Breast epithelium (tissue), 4 donors: ENCODE measurements at regions of chr12 and their contacts with region 1.

Region 1: DNA sequence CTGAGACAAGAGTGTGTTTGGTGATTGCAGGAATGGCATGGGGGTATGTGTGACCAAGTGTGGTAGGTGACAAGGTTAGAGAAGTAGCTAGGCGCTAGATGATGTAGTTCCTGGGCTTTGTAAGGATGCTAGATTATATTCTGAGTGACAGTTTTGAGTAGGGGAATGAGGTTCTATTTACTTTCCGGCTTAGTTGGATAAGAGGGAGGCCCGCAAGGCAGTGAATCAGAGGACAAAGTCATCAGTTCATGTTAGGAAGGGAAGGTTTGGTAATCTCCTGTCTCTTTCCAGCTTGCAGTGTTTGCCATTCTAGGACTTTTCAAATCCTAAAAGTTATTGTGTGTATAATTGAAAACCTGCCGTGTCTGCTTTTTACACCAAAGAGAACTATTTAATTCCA is 45.0 kb downstream of the CFAP54 start:
- DNase-seq: no peak
- H3K4me3 ChIP-seq: no peak overlapping the region
- H3K27ac ChIP-seq: no peak overlapping the region
- H3K4me1 ChIP-seq: no peaks in the 10 kb centered on the region
- H3K27me3 ChIP-seq: no peaks in the 10 kb centered on the region
- CTCF ChIP-seq: no peak
- POLR2A ChIP-seq: no peak

Region 2: GRCh38 chr12:95446506-95446900 is 1087.8 kb before region 1 on chr12:
- intact Hi-C with region 1: loop called (anchors 10 kb)
- DNase-seq: no peak
- H3K4me3 ChIP-seq: peak overlapping the region in 2 of 3 donors; percentile 16 to 38
- H3K27ac ChIP-seq: no peak overlapping the region
- H3K4me1 ChIP-seq: no peaks in the 10 kb centered on the region
- H3K27me3 ChIP-seq: no peaks in the 10 kb centered on the region
- CTCF ChIP-seq: no peak
- POLR2A ChIP-seq: no peak

Region 3: GRCh38 chr12:96766232-96766631 is 231.9 kb after region 1 on chr12:
- intact Hi-C with region 1: no loop called
- DNase-seq: no peak
- H3K4me3 ChIP-seq: no peak overlapping the region
- H3K27ac ChIP-seq: no peak overlapping the region
- H3K4me1 ChIP-seq: no peaks in the 10 kb centered on the region
- H3K27me3 ChIP-seq: no peaks in the 10 kb centered on the region
- CTCF ChIP-seq: no peak
- POLR2A ChIP-seq: no peak